ENCODE measurements at regions of chr19 and their contacts with region 1.

Region 1: GRCh38 chr19:17847538-17848366 is at the start of gene JAK3:
- DNase-seq: peak; percentile 66 to 91 (median 88)
- ATAC-seq: peak; percentile 89
- H3K4me3 ChIP-seq: peak within 1 kb of the TSS; percentile 86
- H3K4me3 Mint-ChIP-seq: peak within 1 kb of the TSS; percentile 87 to 97 (median 93)
- H3K27ac ChIP-seq: peak within 1 kb of the TSS; percentile 95
- H3K27ac Mint-ChIP-seq: peak within 1 kb of the TSS; percentile 92 to 100 (median 97)
- H3K4me1 ChIP-seq: peaks cover 55 to 70% of the 10 kb centered on the region in 2 donors
- H3K4me1 Mint-ChIP-seq: peaks cover 45 to 77% (median 65%) of the 10 kb centered on the region in 7 donors
- H3K27me3 ChIP-seq: no peaks in the 10 kb centered on the region
- H3K27me3 Mint-ChIP-seq: peaks cover 0 to 2% (median 0%) of the 10 kb centered on the region in 5 donors
- total RNA-seq, gene JAK3: 154 to 296 (median 202) TPM

Region 2: GRCh38 chr19:17605761-17606745 is 241.7 kb before region 1 on chr19:
- CTCF ChIA-PET with region 1: no interaction called
- POLR2A ChIA-PET with region 1: no interaction called
- intact Hi-C with region 1: loop called in 1 of 2 experiments (anchors 2 kb)
- DNase-seq: peak; percentile 72 to 93 (median 87)
- ATAC-seq: peak; percentile 96
- H3K4me3 ChIP-seq: peak overlapping the region; percentile 63
- H3K4me3 Mint-ChIP-seq: peak overlapping the region; percentile 64 to 91 (median 81)
- H3K27ac ChIP-seq: peak overlapping the region; percentile 48
- H3K27ac Mint-ChIP-seq: peak overlapping the region in 7 of 9 donors; percentile 63 to 84 (median 74)
- H3K4me1 ChIP-seq: peaks cover 2 to 7% of the 10 kb centered on the region in 2 donors
- H3K4me1 Mint-ChIP-seq: peaks cover 0 to 14% (median 10%) of the 10 kb centered on the region in 7 donors
- H3K27me3 ChIP-seq: no peaks in the 10 kb centered on the region
- H3K27me3 Mint-ChIP-seq: peaks cover 29 to 45% (median 33%) of the 10 kb centered on the region in 5 donors

Region 3: GRCh38 chr19:17718947-17719711 is 128.6 kb before region 1 on chr19 and contains the start of gene MAP1S:
- CTCF ChIA-PET with region 1: interaction called, 3 read pairs
- POLR2A ChIA-PET with region 1: interaction called, 7 read pairs
- intact Hi-C with region 1: loop called in 1 of 2 experiments (anchors 1 kb)
- DNase-seq: peak; percentile 26 to 82 (median 51)
- ATAC-seq: peak; percentile 85
- H3K4me3 ChIP-seq: peak within 1 kb of the TSS; percentile 71
- H3K4me3 Mint-ChIP-seq: peak within 1 kb of the TSS; percentile 85 to 93 (median 90)
- H3K27ac ChIP-seq: peak within 1 kb of the TSS; percentile 76
- H3K27ac Mint-ChIP-seq: peak within 1 kb of the TSS; percentile 75 to 96 (median 88)
- H3K4me1 ChIP-seq: peaks cover 19 to 24% of the 10 kb centered on the region in 2 donors
- H3K4me1 Mint-ChIP-seq: peaks cover 33 to 39% (median 36%) of the 10 kb centered on the region in 7 donors
- H3K27me3 ChIP-seq: no peaks in the 10 kb centered on the region
- H3K27me3 Mint-ChIP-seq: peaks cover 0 to 2% (median 0%) of the 10 kb centered on the region in 5 donors
- total RNA-seq, gene MAP1S: 28.6 to 73.8 (median 52.5) TPM

Region 4: DNA sequence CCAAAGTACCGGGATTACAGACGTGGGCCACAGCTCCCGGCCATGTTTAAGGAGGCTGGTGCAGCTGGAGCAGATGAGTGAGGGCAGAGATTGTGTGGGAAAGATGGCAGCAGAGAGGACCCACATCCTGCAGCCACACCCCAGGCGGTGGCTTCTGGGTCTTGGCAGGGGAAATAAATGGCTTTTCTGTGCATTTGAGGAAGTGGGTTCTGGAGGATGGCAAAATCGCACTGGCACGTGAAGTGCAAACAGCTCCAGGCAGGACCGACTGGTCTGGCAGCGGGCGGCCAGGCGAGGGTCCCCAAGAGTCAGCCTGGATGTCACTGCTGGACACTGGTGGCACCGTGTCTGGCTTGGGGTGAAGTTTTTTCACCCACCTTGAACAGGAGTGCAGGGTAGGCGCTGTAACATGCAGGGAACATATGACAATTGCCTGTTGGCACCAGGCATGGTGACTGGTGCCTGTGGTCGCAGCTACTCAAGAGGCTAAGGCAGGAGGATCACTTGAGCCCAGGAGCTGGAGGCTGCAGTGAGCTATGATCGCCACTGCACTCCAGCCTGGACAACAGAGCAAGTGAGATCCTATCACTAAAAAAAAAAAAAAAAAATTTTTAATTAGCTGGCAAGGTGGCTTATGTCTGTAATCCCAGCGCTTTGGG is 44.4 kb before region 1 on chr19:
- CTCF ChIA-PET with region 1: no interaction called
- POLR2A ChIA-PET with region 1: interaction called, 41 read pairs
- intact Hi-C with region 1: loop called in 1 of 2 experiments (anchors 1 kb)
- DNase-seq: peak in 6 of 9 donors; percentile 60 to 72 (median 69)
- ATAC-seq: peak; percentile 77
- H3K4me3 ChIP-seq: peak overlapping the region; percentile 38
- H3K4me3 Mint-ChIP-seq: peak overlapping the region; percentile 75 to 88 (median 82)
- H3K27ac ChIP-seq: peak overlapping the region; percentile 25
- H3K27ac Mint-ChIP-seq: peak overlapping the region; percentile 76 to 97 (median 88)
- H3K4me1 ChIP-seq: peaks cover 15 to 34% of the 10 kb centered on the region in 2 donors
- H3K4me1 Mint-ChIP-seq: peaks cover 19 to 55% (median 40%) of the 10 kb centered on the region in 7 donors
- H3K27me3 ChIP-seq: no peaks in the 10 kb centered on the region
- H3K27me3 Mint-ChIP-seq: peaks cover 0 to 12% (median 0%) of the 10 kb centered on the region in 5 donors

Region 5: DNA sequence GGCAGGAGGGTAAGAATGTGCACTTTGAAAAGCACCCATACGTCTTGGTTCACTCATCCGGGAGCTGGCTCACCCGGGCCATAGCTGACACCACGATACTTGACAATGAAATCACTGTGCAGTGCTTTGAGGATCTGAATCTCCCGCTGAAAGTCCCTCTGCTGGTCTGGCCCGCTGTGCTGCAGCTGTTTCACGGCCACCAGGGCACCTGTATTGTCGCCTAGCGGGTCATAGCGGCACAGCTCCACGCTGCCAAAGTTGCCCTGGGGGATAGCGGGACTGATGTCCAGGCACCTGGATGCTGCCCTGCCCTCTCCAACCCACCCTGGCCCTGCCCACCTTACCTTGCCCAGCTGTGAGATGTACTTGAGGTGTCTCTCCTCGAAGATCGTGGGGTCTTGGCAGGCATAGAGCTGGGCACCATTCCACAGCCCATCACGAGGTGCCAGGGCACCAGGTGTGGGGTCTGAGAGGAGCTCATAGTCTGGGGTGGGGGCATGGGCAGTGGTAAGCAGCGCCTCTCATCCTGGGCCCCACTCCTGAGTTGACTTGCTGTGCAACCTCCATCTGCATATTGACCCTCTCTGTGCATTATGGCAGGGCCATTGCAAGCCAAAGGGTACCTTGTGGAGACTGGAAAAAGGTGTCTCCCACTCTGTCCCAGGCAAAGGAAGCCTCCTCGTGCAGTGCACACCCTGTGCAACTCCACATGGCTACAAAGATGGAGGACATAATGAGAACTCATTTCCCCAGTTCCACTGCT is 15.1 kb before region 1 on chr19:
- CTCF ChIA-PET with region 1: interaction called, 3 read pairs
- POLR2A ChIA-PET with region 1: interaction called, 5 read pairs
- intact Hi-C with region 1: loop called in 1 of 2 experiments (anchors 2 kb)
- DNase-seq: no peak
- ATAC-seq: no peak
- H3K4me3 ChIP-seq: no peak overlapping the region
- H3K4me3 Mint-ChIP-seq: no peak overlapping the region
- H3K27ac ChIP-seq: no peak overlapping the region
- H3K27ac Mint-ChIP-seq: peak overlapping the region in 6 of 9 donors; percentile 10 to 74 (median 14)
- H3K4me1 ChIP-seq: no peaks in the 10 kb centered on the region
- H3K4me1 Mint-ChIP-seq: peaks cover 10 to 36% (median 21%) of the 10 kb centered on the region in 7 donors
- H3K27me3 ChIP-seq: no peaks in the 10 kb centered on the region
- H3K27me3 Mint-ChIP-seq: no peaks in the 10 kb centered on the region

Region 6: DNA sequence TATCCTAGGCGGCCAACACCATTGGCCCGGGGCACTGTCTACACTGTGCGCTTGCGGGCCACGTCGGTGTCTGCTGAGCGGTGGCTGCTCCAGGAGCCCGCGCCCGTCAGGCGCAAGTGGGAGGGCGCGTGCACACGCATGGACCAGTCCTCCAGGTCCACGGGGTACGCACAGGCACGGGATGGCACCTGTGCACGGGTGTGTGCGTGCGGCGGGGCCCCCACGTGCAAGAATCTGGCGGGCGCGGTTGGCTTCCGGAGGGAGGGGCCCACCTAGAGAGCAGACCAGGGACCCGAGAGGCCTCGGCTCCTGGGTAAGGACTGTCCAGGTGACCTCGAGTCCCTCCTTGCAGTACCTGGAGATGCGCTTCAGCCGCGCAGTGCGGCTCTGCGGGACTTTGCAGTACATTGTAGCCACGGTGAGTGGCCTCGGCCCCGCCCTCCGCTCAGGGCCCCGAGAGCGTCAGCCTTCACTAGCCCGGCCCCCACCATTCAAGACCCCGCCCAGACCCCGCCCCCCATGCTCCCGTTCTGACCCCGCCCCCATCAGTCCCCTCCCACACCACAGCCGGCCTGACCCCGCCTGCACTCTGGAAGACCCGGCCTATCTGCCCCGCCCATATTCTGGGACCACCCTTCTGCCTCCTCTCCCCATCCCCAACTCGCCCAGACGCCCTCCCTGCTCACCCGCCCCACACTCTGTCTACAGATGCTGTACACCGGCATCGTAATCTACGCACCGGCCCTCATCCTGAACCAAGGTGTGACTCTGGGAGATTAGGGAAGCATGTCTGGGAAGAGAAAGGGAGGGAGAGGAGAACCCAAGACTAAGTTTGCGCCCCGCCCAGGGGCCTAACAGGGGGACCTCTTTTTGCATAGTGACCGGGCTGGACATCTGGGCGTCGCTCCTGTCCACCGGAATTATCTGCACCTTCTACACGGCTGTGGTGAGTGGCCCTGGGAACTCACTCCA is 26.3 kb after region 1 on chr19:
- CTCF ChIA-PET with region 1: no interaction called
- POLR2A ChIA-PET with region 1: interaction called, 3 read pairs
- intact Hi-C with region 1: loop called in 1 of 2 experiments (anchors 1 kb)
- DNase-seq: peak; percentile 42 to 75 (median 68)
- ATAC-seq: peak; percentile 92
- H3K4me3 ChIP-seq: peak overlapping the region; percentile 64
- H3K4me3 Mint-ChIP-seq: peak overlapping the region; percentile 73 to 88 (median 84)
- H3K27ac ChIP-seq: peak overlapping the region; percentile 47
- H3K27ac Mint-ChIP-seq: peak overlapping the region; percentile 18 to 85 (median 74)
- H3K4me1 ChIP-seq: peaks cover 10 to 11% of the 10 kb centered on the region in 2 donors
- H3K4me1 Mint-ChIP-seq: peaks cover 0 to 30% (median 10%) of the 10 kb centered on the region in 7 donors
- H3K27me3 ChIP-seq: no peaks in the 10 kb centered on the region
- H3K27me3 Mint-ChIP-seq: peaks cover 0 to 2% (median 0%) of the 10 kb centered on the region in 5 donors

Measured in naive thymus-derived CD4-positive, alpha-beta T cell (primary cell).